ENCODE measurements at regions of chr22 and their contacts with region 1.

Region 1: GRCh38 chr22:35430897-35431322 is 31.0 kb downstream of the MCM5 start:
- DNase-seq: peak; percentile 84
- H3K4me3 Mint-ChIP-seq: no peak overlapping the region
- H3K27ac Mint-ChIP-seq: no peak overlapping the region
- H3K4me1 Mint-ChIP-seq: peaks cover 10% of the 10 kb centered on the region
- H3K27me3 Mint-ChIP-seq: no peaks in the 10 kb centered on the region
- CTCF ChIP-seq: peak; percentile 94

Region 2: DNA sequence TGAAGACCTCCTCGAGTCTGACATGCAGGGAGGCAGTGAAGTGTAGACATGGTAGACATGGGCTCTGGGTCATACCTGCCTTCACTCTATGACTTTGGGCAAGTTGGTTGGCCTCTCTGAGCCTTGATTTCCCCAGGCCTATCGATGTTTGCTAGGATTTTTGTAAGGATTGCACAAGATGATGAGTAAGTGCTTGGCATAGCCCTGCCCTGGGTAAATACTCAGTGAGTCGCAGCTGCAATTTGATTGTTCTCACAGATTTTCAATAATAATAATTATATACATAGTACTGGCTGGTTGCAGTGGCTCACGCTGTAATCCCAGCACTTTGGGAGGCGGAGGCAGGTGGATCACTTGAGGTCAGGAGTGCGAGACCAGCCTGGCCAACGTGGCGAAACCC is 12.8 kb before region 1 on chr22:
- CTCF ChIA-PET with region 1: interaction called, 22 read pairs
- POLR2A ChIA-PET with region 1: interaction called, 3 read pairs
- intact Hi-C with region 1: no loop called
- DNase-seq: peak; percentile 68
- H3K4me3 Mint-ChIP-seq: no peak overlapping the region
- H3K27ac Mint-ChIP-seq: no peak overlapping the region
- H3K4me1 Mint-ChIP-seq: no peaks in the 10 kb centered on the region
- H3K27me3 Mint-ChIP-seq: no peaks in the 10 kb centered on the region
- CTCF ChIP-seq: no peak